ENCODE measurements at regions of chr19 and their contacts with region 1.

Region 1: DNA sequence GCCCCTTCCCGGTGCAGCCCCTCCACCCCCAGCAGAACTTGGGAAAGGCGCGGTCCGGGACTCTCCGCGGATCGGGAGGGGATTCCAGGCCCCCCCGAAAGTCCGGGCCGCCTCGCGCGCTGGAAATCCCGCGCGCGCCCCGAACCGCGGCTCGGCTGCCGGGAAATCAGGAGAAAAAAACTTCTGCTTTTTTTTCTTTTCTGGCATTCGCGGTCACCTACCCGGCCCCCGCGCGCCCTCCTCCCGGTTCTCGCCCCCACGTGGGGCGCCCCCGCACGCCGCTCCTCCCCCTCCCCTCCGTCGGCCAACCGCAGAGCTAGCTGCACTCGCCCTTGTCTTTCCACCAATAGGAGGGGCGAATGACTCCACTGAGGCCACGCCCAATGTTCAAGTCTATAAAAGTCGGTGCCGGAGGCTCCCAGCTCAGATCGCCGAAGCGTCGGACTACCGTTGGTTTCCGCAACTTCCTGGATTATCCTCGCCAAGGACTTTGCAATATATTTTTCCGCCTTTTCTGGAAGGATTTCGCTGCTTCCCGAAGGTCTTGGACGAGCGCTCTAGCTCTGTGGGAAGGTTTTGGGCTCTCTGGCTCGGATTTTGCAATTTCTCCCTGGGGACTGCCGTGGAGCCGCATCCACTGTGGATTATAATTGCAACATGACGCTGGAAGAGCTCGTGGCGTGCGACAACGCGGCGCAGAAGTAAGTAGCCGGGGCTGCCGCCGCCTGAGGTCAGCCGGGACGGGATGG is at the start of gene GADD45B:
- DNase-seq: peak; percentile 82 to 94
- H3K4me3 ChIP-seq: peak within 1 kb of the TSS; percentile 77
- H3K27ac ChIP-seq: peak within 1 kb of the TSS; percentile 92
- H3K4me1 ChIP-seq: peaks cover 11% of the 10 kb centered on the region
- H3K27me3 ChIP-seq: no peaks in the 10 kb centered on the region
- CTCF ChIP-seq: no peak
- total RNA-seq, gene GADD45B: 24.7 and 35.5 TPM in 2 replicates

Region 2: DNA sequence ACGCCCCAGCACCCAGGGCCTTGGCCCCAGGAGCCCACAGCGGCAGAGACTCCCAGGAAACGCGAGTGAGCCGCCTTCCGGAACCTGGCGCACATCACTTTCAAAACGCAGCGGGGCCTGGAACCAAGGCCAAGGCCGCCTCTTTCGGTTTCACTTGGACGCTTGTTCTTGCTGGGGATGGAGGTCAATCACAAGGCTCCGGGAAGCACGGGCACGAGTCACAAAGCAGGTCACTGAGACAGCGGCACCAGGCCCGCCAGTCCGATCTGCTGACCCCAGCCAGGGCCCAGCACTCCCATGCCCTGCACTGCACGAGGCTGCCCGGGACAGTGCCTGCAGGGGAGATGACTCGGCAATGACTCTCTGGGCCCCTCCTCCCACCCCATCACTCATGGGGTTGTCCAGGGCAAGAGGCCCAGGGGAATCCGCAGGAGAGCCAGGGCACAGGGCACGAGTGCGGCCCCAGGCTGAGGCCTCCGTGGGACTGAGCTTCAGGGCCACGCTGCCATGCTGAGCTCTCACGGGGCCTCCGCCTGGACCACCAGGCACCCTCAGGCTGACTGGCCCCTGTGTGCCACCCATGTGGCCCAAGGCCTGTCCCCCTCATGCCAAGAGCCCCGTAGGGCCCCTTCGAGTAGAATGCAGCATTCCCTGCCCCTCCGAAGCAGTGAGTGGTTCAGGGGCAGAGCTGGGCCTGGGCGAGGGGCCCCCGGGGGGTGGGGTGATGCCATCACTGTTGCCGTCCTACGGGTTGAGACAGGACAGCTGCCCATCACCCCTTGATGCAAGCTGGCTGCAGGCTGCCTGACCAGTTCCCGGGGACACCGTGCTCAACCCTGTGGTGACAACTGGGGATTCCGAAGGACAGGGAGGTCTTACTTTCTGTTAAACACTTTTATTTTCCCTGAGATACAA is 1306.7 kb before region 1 on chr19:
- CTCF ChIA-PET with region 1: no interaction called
- POLR2A ChIA-PET with region 1: interaction called, 11 read pairs
- intact Hi-C with region 1: no loop called
- DNase-seq: peak; percentile 74 to 78
- H3K4me3 ChIP-seq: peak overlapping the region; percentile 78
- H3K27ac ChIP-seq: peak overlapping the region; percentile 84
- H3K4me1 ChIP-seq: peaks cover 50% of the 10 kb centered on the region
- H3K27me3 ChIP-seq: no peaks in the 10 kb centered on the region
- CTCF ChIP-seq: no peak

Region 3: GRCh38 chr19:2524838-2525723 is 49.2 kb after region 1 on chr19:
- CTCF ChIA-PET with region 1: interaction called, 5 read pairs
- POLR2A ChIA-PET with region 1: interaction called, 11 read pairs
- intact Hi-C with region 1: loop called (anchors 2 kb)
- DNase-seq: peak; percentile 88 to 93
- H3K4me3 ChIP-seq: peak overlapping the region; percentile 50
- H3K27ac ChIP-seq: peak overlapping the region; percentile 88
- H3K4me1 ChIP-seq: peaks cover 41% of the 10 kb centered on the region
- H3K27me3 ChIP-seq: no peaks in the 10 kb centered on the region
- CTCF ChIP-seq: no peak

Region 4: DNA sequence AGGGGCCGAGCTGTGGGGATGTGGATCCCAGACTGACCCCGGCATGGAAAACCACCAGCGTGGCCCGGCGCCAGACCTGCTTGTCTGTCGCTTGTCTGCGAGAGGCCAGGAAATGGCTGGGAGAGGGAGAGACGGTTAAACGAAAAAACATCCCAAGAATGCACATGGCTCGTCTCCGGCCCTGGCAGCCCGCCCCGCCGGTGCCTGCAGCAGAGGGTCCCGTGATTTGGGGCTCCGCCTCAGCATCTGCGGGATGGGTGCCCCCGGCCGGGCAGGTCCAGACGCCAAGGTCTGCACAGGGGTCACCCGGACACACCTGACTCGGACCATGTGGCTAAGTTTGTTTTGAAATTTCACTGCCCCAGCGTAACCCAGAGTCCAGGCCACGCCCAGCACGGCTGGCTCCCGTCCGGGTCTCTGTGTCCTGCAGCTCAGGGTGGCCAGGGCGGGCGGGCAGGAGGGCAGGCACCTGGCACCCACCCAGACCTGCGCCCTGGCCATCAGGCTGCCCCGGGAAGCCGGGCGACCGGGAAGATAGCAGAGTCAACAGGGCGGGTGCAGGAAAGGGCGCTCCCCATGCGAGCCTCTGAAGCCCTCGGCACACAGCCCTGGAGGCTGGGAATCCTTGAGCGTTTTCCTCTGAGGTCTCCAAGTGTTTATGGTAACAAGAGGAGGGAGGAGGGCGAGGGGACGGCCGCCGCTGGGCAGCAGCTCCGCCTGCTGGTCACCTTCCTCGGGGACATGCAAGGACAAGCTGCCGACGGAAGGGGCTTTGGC is 103.2 kb after region 1 on chr19:
- CTCF ChIA-PET with region 1: interaction called, 8 read pairs
- POLR2A ChIA-PET with region 1: interaction called, 31 read pairs
- intact Hi-C with region 1: loop called (anchors 1 kb)
- DNase-seq: peak; percentile 86 to 93
- H3K4me3 ChIP-seq: peak overlapping the region; percentile 51; the same call in 1 of the 2 replicates
- H3K27ac ChIP-seq: peak overlapping the region; percentile 90
- H3K4me1 ChIP-seq: peaks cover 21% of the 10 kb centered on the region
- H3K27me3 ChIP-seq: no peaks in the 10 kb centered on the region
- CTCF ChIP-seq: peak; percentile 87

Region 5: GRCh38 chr19:2610637-2611482 is 135.0 kb after region 1 on chr19:
- CTCF ChIA-PET with region 1: interaction called, 3 read pairs
- POLR2A ChIA-PET with region 1: interaction called, 14 read pairs
- intact Hi-C with region 1: loop called (anchors 1 kb)
- DNase-seq: peak; percentile 60 to 85
- H3K4me3 ChIP-seq: no peak overlapping the region; the same call in 1 of the 2 replicates
- H3K27ac ChIP-seq: no peak overlapping the region
- H3K4me1 ChIP-seq: no peaks in the 10 kb centered on the region
- H3K27me3 ChIP-seq: no peaks in the 10 kb centered on the region
- CTCF ChIP-seq: peak; percentile 86

Region 6: GRCh38 chr19:2877398-2878331 is 401.8 kb after region 1 on chr19:
- CTCF ChIA-PET with region 1: no interaction called
- POLR2A ChIA-PET with region 1: no interaction called
- intact Hi-C with region 1: no loop called
- DNase-seq: no peak
- H3K4me3 ChIP-seq: no peak overlapping the region
- H3K27ac ChIP-seq: no peak overlapping the region
- H3K4me1 ChIP-seq: no peaks in the 10 kb centered on the region
- H3K27me3 ChIP-seq: peaks cover 6% of the 10 kb centered on the region
- CTCF ChIP-seq: no peak

Measured in PC-9 (cell line).